GM18951 (cell line): ENCODE measurements at regions of chr12 and their contacts with region 1.

Region 1: GRCh38 chr12:122946690-122947341 is 19.4 kb downstream of the ABCB9 start:
- POLR2A ChIP-seq: no peak

Region 2: DNA sequence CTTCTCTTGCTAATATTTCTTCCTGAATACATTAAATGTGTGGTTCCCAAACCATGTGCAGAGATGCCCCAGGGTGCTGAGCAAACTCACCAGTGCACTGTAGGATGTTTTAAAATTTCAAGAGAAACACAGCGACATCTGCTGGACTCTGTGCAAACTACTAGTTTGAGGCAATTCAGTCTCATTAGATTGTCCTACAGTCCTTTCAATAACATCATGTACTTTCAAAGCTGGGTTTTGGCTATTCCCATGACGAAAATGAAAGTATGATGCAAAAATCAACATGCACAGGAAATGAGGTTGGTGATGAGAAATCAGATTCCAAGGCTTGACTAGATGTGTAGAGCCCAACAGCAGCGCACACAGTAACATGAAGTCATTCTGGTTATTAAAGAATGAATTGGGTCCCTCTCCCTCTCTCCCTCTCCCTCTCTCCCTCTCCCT is 590.6 kb before region 1 on chr12:
- in situ Hi-C with region 1: no loop called
- POLR2A ChIP-seq: no peak

Region 3: GRCh38 chr12:122888232-122888867 is 58.5 kb before region 1 on chr12:
- in situ Hi-C with region 1: loop called (anchors 10 kb)
- POLR2A ChIP-seq: no peak

Region 4: DNA sequence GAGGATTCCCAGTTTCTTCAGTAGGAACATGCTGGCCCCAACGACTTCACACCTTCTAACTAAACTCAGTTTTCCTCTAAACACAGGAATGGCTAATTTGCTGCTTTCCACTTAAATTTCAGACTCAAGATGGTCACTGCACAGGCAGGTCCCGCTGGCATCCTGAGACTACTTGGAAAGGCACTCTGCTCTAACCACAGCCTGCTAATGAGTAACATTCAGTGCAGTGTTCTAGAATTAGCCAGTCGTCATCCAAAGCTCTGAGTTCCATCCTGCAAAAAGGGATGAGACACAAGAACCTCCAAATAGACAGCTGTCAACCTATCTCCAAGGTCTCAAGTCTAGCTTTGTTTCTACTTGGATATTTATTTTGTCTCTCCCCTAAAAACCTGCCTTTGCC is 1019.8 kb after region 1 on chr12:
- in situ Hi-C with region 1: no loop called
- POLR2A ChIP-seq: no peak